Pancreas (tissue), 10 donors: ENCODE measurements at regions of chr21 and their contacts with region 1.

Region 1: GRCh38 chr21:40385892-40386599 is 460.9 kb downstream of the DSCAM start:
- DNase-seq: peak; percentile 50 to 86 (median 68)
- ATAC-seq: peak; percentile 76 to 98 (median 95)
- H3K4me3 ChIP-seq: no peak overlapping the region
- H3K27ac ChIP-seq: no peak overlapping the region
- H3K4me1 ChIP-seq: no peaks in the 10 kb centered on the region
- H3K27me3 ChIP-seq: peaks cover 0 to 13% (median 0%) of the 10 kb centered on the region in 4 donors
- CTCF ChIP-seq: peak; percentile 69 to 92 (median 86)

Region 2: DNA sequence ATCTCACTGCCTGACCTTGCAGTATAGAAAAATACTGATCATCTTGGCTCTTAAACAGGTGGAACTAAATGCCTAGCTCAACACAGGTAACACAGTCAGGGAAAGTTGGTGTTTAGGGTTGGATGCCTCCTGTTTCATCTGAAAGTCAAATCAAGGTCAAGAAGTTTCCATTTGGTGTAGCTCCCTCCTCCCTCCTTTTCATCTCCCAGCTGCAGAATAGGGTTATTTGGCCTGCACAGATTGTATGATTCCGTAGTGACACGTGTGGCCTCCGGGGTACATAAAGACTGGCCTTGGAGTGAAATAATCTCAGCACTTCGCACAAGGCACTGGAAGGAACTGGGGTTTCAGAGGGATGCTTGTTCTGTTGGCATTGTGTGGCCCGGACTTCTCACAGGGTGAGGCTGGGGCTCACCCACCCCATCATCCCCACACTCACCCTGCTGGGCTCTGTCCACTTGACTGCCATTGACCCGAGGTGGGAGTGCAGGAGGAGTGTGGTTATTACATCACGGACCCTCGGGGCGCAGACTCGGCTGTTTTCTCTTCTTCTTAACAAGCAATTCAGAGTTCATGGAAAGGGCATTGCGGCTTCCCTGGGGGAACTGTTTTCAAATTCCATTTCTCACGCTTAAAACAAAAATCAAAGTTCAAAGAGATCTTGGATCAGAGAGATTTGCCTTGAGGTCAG is 622.6 kb before region 1 on chr21:
- intact Hi-C with region 1: no loop called
- DNase-seq: no peak
- ATAC-seq: no peak
- H3K4me3 ChIP-seq: no peak overlapping the region
- H3K27ac ChIP-seq: no peak overlapping the region
- H3K4me1 ChIP-seq: no peaks in the 10 kb centered on the region
- H3K27me3 ChIP-seq: no peaks in the 10 kb centered on the region
- CTCF ChIP-seq: no peak

Region 3: GRCh38 chr21:40143822-40144525 is 242.1 kb before region 1 on chr21:
- intact Hi-C with region 1: loop called in 2 of 3 experiments (anchors 2 to 10 kb)
- DNase-seq: peak in 5 of 6 donors; percentile 12 to 85 (median 57)
- ATAC-seq: peak in 3 of 4 donors; percentile 72 to 77 (median 77)
- H3K4me3 ChIP-seq: no peak overlapping the region
- H3K27ac ChIP-seq: no peak overlapping the region
- H3K4me1 ChIP-seq: no peaks in the 10 kb centered on the region
- H3K27me3 ChIP-seq: peaks cover 0 to 3% (median 0%) of the 10 kb centered on the region in 4 donors
- CTCF ChIP-seq: peak; percentile 55 to 92 (median 78)